H1 (cell line): ENCODE measurements at regions of chr1 and their contacts with region 1.

Region 1: GRCh38 chr1:150561974-150562445 is 12.8 kb downstream of the ADAMTSL4 start:
- DNase-seq: peak; percentile 80 to 91
- H3K4me3 ChIP-seq: peak overlapping the region; percentile 42 to 79 (median 70)
- H3K27ac ChIP-seq: peak overlapping the region; percentile 88
- H3K4me1 ChIP-seq: peaks cover 16 to 27% (median 21%) of the 10 kb centered on the region in 4 experiments
- H3K27me3 ChIP-seq: no peaks in the 10 kb centered on the region
- CTCF ChIP-seq: no peak
- EP300 ChIP-seq: no peak
- POLR2A ChIP-seq: no peak; a peak in 1 of 3 replicates
- RAD21 ChIP-seq: no peak

Region 2: GRCh38 chr1:150456146-150456647 is 105.8 kb before region 1 on chr1:
- CTCF ChIA-PET with region 1: no interaction called
- POLR2A ChIA-PET with region 1: no interaction called
- DNase-seq: no peak
- H3K4me3 ChIP-seq: no peak overlapping the region
- H3K27ac ChIP-seq: no peak overlapping the region
- H3K4me1 ChIP-seq: no peaks in the 10 kb centered on the region
- H3K27me3 ChIP-seq: no peaks in the 10 kb centered on the region
- CTCF ChIP-seq: no peak
- EP300 ChIP-seq: no peak
- POLR2A ChIP-seq: no peak
- RAD21 ChIP-seq: no peak

Region 3: DNA sequence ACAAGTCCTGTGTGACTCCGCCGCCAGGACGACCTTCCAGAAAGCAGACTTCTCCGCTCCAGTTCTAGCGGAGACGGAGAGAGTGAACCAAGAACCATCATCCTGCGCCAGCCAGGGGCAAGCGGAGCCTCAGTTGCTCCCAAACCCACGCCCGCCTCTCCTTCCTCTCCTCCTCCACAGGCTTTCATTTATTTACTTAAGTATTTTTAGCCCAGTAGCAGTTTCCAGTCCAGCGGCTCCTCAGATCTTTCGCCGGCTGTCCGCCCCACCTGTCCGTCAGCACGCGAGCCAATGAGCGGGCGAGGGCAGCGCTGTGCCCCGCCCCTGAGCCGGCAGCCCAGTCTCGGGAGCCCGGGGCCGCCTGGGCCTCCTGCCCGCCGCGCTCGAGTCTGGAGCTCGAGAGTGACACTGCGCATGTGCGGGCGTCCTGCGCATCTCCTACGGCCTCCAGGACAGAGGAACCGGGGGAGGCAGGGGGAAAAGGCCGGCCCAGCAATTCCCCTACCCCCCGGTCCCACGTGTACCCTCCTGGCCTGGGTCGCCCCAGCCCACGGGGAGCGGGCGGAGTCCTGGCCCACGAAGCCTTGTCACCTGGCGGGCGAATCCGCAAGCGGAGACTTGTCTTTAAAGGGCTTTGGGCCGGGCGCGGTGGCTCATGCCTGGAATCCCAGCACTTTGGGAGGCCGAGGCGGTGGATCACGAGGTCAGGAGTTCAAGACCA is 46.5 kb before region 1 on chr1 and contains the start of gene FALEC:
- CTCF ChIA-PET with region 1: interaction called, 9 read pairs
- POLR2A ChIA-PET with region 1: interaction called, 10 read pairs
- DNase-seq: peak; percentile 87 to 98
- H3K4me3 ChIP-seq: peak within 1 kb of the TSS; percentile 72 to 91 (median 82)
- H3K27ac ChIP-seq: no peak within 1 kb of the TSS
- H3K4me1 ChIP-seq: peaks cover 0 to 4% (median 3%) of the 10 kb centered on the region in 4 experiments; a peak in 5 of 7 replicates
- H3K27me3 ChIP-seq: no peaks in the 10 kb centered on the region; a peak in 1 of 7 replicates
- CTCF ChIP-seq: no peak
- EP300 ChIP-seq: no peak
- POLR2A ChIP-seq: peak in 1 of 2 experiments; percentile 30; a peak in 2 of 3 replicates
- RAD21 ChIP-seq: 0 out of 4 replicates have a peak, but pooled peaks of 1 of the 2 experiments have one; percentile 5
- total RNA-seq, gene FALEC: 1.1 TPM in 1 of 2 replicates, not detected in the other

Region 4: GRCh38 chr1:150543500-150544141 is 18.4 kb before region 1 on chr1:
- CTCF ChIA-PET with region 1: interaction called, 65 read pairs
- POLR2A ChIA-PET with region 1: interaction called, 1,013 read pairs
- DNase-seq: no peak
- H3K4me3 ChIP-seq: no peak overlapping the region
- H3K27ac ChIP-seq: no peak overlapping the region
- H3K4me1 ChIP-seq: no peaks in the 10 kb centered on the region
- H3K27me3 ChIP-seq: peaks cover 0 to 8% (median 6%) of the 10 kb centered on the region in 4 experiments; a peak in 5 of 7 replicates
- CTCF ChIP-seq: no peak
- EP300 ChIP-seq: no peak
- POLR2A ChIP-seq: no peak
- RAD21 ChIP-seq: no peak

Region 5: DNA sequence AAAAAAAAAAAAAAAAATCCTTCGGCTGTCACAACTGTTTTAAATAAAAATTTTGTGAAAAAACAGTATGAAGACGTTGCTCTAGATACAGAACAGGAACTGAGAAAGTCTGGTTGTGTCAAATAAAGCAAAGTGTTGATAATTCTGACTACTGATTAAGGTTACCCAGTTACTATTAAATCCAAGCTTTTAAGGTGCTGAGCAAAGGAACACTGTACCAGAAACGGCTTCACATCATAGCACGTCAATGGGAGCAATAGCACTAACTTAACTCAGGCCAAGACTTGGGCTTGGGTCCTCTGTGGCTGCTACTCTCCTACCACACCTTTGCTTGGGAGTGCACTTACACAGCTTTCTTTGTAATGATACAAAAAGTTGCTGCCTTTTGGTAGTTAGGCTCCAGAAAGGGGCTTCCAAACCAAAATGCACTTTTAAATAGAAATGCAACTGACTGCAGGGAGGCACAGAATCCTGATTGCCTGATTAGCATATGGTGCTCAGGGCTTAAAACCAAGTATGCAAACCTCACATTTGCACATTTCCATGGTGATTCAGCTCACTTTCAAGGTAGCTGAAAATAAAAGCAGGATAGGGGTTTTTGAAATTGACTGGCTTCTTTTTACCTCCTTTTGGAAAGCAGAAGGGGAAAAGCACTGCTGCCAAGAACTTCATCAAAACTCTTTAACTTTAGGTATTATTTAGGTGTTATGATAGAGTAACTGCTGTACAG is 11.1 kb after region 1 on chr1:
- CTCF ChIA-PET with region 1: interaction called, 34 read pairs
- POLR2A ChIA-PET with region 1: interaction called, 1,013 read pairs
- DNase-seq: no peak
- H3K4me3 ChIP-seq: peak overlapping the region in 2 of 4 experiments; percentile 8 to 12; a peak in 2 of 8 replicates
- H3K27ac ChIP-seq: no peak overlapping the region; the same call in 1 of the 2 replicates
- H3K4me1 ChIP-seq: peaks cover 14 to 31% (median 18%) of the 10 kb centered on the region in 4 experiments; a peak in 6 of 7 replicates
- H3K27me3 ChIP-seq: no peaks in the 10 kb centered on the region
- CTCF ChIP-seq: no peak
- EP300 ChIP-seq: no peak
- POLR2A ChIP-seq: peak; percentile 69 to 72
- RAD21 ChIP-seq: no peak

Region 6: DNA sequence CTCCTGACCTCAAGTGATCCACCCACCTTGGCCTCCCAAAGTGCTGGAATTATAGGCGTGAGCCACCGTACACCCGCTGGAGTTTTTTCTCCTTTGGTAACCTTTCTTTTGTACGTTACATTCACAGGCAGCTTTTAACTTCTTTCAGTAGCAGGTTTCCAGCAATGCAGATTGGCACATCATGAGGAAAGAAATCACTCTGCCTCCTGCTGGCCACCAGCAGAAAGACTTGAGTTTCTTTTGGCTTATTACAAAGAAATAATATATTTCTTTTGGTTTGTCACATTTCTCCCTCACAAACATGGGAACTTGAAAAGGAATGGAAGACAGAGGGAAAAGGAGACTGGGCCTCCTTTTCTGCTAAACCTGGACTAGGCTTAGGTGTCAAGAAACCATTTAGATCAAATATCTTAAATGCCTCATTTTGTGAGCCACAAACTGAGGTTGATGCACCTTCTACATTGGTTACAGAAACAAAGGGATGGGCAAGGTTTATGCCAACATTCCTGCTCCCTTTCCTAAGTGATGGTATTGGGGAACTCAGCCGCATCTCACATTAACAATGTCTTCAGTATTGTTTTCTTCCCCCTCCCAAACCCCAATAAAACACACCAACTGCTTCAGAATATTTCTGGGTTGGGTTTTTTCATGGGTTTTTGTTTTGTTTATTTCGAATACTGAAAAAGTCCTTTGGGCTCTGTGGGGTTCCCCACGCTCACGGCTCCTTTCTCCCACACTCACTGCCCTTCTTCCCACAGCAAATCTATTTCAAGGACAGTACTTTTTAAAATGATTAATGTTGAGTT is 59.7 kb after region 1 on chr1:
- CTCF ChIA-PET with region 1: interaction called, 210 read pairs
- POLR2A ChIA-PET with region 1: interaction called, 1,380 read pairs
- DNase-seq: no peak
- H3K4me3 ChIP-seq: no peak overlapping the region
- H3K27ac ChIP-seq: no peak overlapping the region
- H3K4me1 ChIP-seq: peaks cover 0 to 7% (median 2%) of the 10 kb centered on the region in 4 experiments; a peak in 1 of 7 replicates
- H3K27me3 ChIP-seq: no peaks in the 10 kb centered on the region
- CTCF ChIP-seq: peak in 2 of 3 experiments; percentile 63 to 66; a peak in 3 of 4 replicates
- EP300 ChIP-seq: no peak
- POLR2A ChIP-seq: no peak
- RAD21 ChIP-seq: peak; percentile 47 to 60; a peak in 3 of 4 replicates

Region 7: GRCh38 chr1:150813058-150813707 is 251.2 kb after region 1 on chr1:
- CTCF ChIA-PET with region 1: interaction called, 11 read pairs
- POLR2A ChIA-PET with region 1: no interaction called
- DNase-seq: peak in 1 of 2 experiments; percentile 29
- H3K4me3 ChIP-seq: no peak overlapping the region
- H3K27ac ChIP-seq: no peak overlapping the region
- H3K4me1 ChIP-seq: peaks cover 0 to 2% (median under 1%) of the 10 kb centered on the region in 4 experiments; a peak in 3 of 7 replicates
- H3K27me3 ChIP-seq: no peaks in the 10 kb centered on the region
- CTCF ChIP-seq: peak; percentile 71 to 79 (median 78)
- EP300 ChIP-seq: no peak
- POLR2A ChIP-seq: no peak
- RAD21 ChIP-seq: peak; percentile 84 to 87